Thyroid gland (tissue), 4 donors: ENCODE measurements at regions of chr5 and their contacts with region 1.

Region 1: DNA sequence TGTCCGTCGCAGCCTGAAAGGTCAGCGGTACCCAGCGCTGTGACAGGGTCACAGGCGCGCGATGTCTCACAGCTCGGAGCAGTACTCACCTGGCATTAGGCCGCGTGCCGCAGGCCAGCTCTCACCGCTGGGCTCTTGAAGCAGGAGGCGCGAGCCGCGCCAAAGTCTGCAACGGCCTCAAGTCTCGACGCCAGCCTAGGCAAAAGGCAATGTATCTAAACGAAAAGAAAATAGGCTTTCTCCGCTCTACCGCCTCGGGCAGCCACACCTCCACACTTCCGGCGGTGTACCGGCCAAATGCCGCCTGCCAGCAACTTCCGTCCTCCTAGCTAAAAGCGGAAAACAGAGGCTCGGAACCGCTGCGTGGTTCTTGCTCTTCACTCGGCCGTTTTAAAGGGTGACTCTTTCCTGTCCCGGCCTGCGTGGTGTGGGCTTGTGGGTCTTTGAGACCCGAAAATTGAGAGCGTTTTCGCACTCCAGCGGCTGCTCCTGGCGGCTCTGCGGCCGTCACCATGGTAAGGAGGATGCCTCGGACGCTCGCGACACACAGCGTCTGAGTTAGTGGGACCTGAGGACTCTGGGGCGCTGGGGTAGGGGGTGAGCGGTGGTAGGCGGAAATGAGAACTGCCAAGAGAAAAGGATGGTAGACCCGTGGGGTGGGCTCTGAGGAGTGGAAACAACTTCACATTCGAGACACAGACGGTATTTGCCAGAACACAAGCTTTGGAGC is at the starts of genes GFM2 and NSA2:
- DNase-seq: peak; percentile 88 to 93
- H3K4me3 ChIP-seq: peak within 1 kb of the TSS; percentile 73 to 90 (median 87)
- H3K27ac ChIP-seq: peak within 1 kb of the TSS; percentile 15 to 79 (median 76)
- H3K4me1 ChIP-seq: peaks cover 19 to 25% of the 10 kb centered on the region in 2 donors
- H3K27me3 ChIP-seq: no peaks in the 10 kb centered on the region
- CTCF ChIP-seq: peak in 1 of 6 experiments; percentile 22
- POLR2A ChIP-seq: peak in 1 of 2 donors; percentile 53
- total RNA-seq, gene GFM2: 26.5 to 49.0 (median 32.8) TPM
- total RNA-seq, gene NSA2: 75.3 to 228 (median 93.0) TPM

Region 2: GRCh38 chr5:74919487-74919886 is 152.5 kb after region 1 on chr5:
- intact Hi-C with region 1: loop called (anchors 5 kb)
- DNase-seq: no peak
- H3K4me3 ChIP-seq: no peak overlapping the region
- H3K27ac ChIP-seq: no peak overlapping the region
- H3K4me1 ChIP-seq: no peaks in the 10 kb centered on the region
- H3K27me3 ChIP-seq: no peaks in the 10 kb centered on the region
- CTCF ChIP-seq: peak in 5 of 6 experiments; percentile 38 to 65 (median 56)
- POLR2A ChIP-seq: no peak